Naive thymus-derived CD4-positive, alpha-beta T cell (primary cell): ENCODE measurements at regions of chr3 and their contacts with region 1.

Region 1: GRCh38 chr3:48609088-48610005 is at the start of gene UQCRC1:
- DNase-seq: peak; percentile 85 to 94 (median 93)
- ATAC-seq: peak; percentile 99
- H3K4me3 ChIP-seq: peak within 1 kb of the TSS; percentile 96
- H3K4me3 Mint-ChIP-seq: peak within 1 kb of the TSS; percentile 86 to 100 (median 98)
- H3K27ac ChIP-seq: peak within 1 kb of the TSS; percentile 84
- H3K27ac Mint-ChIP-seq: peak within 1 kb of the TSS; percentile 91 to 99 (median 97)
- H3K4me1 ChIP-seq: peaks cover 10 to 12% of the 10 kb centered on the region in 2 donors
- H3K4me1 Mint-ChIP-seq: peaks cover 12 to 31% (median 19%) of the 10 kb centered on the region in 7 donors
- H3K27me3 ChIP-seq: no peaks in the 10 kb centered on the region
- H3K27me3 Mint-ChIP-seq: no peaks in the 10 kb centered on the region
- total RNA-seq, gene UQCRC1: 77.3 to 156 (median 91.7) TPM

Region 2: DNA sequence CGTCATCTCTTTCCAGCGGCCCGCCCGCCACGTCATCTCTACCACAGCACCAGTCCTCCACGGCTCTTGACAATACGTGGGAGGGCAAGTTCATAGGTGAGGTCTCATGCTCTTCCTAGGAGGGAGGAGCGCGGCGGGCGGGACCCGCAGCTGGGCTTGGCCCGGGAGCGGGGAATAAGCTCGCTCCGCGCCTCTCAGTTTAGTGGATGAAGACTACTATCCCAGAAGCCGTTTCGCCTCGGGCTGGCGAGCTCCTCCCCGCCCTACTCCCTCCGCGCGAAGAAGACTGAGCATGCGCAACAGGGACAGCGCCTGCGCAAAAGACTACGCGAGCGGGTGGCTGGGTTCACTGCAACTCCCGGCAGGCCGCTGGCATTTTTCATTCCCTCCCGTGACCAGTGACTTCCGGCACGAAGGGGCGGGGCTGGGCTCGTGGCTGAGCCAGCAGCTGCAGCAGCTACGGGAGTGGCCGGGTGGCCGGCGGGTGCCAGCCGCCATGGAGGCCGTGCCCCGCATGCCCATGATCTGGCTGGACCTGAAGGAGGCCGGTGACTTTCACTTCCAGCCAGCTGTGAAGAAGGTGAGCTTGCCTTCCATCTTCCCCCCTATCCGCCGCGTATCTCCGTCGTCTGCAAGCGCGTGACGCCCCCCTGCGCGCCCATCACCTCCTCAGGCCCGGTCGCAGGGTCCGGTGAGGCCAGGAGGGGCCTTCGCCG is 1228.6 kb before region 1 on chr3 and contains the start of gene PTPN23:
- CTCF ChIA-PET with region 1: no interaction called
- POLR2A ChIA-PET with region 1: no interaction called
- intact Hi-C with region 1: loop called in 1 of 2 experiments (anchors 2 kb)
- DNase-seq: peak; percentile 96 to 99 (median 99)
- ATAC-seq: peak; percentile 82
- H3K4me3 ChIP-seq: peak within 1 kb of the TSS; percentile 86
- H3K4me3 Mint-ChIP-seq: peak within 1 kb of the TSS; percentile 90 to 100 (median 98)
- H3K27ac ChIP-seq: peak within 1 kb of the TSS; percentile 92
- H3K27ac Mint-ChIP-seq: peak within 1 kb of the TSS; percentile 92 to 100 (median 99)
- H3K4me1 ChIP-seq: peaks cover 23 to 26% of the 10 kb centered on the region in 2 donors
- H3K4me1 Mint-ChIP-seq: peaks cover 40 to 56% (median 48%) of the 10 kb centered on the region in 7 donors
- H3K27me3 ChIP-seq: no peaks in the 10 kb centered on the region
- H3K27me3 Mint-ChIP-seq: peaks cover 0 to 2% (median 0%) of the 10 kb centered on the region in 5 donors
- total RNA-seq, gene PTPN23: 35.8 to 51.2 (median 38.5) TPM

Region 3: GRCh38 chr3:48273594-48274211 is 335.6 kb before region 1 on chr3:
- CTCF ChIA-PET with region 1: no interaction called
- POLR2A ChIA-PET with region 1: no interaction called
- intact Hi-C with region 1: loop called in 1 of 2 experiments (anchors 1 kb)
- DNase-seq: peak in 8 of 9 donors; percentile 37 to 66 (median 55)
- ATAC-seq: peak; percentile 60
- H3K4me3 ChIP-seq: no peak overlapping the region
- H3K4me3 Mint-ChIP-seq: no peak overlapping the region
- H3K27ac ChIP-seq: no peak overlapping the region
- H3K27ac Mint-ChIP-seq: peak overlapping the region in 4 of 9 donors; percentile 8 to 74 (median 51)
- H3K4me1 ChIP-seq: peaks cover 4 to 14% of the 10 kb centered on the region in 2 donors
- H3K4me1 Mint-ChIP-seq: peaks cover 6 to 29% (median 21%) of the 10 kb centered on the region in 7 donors
- H3K27me3 ChIP-seq: no peaks in the 10 kb centered on the region
- H3K27me3 Mint-ChIP-seq: no peaks in the 10 kb centered on the region

Region 4: DNA sequence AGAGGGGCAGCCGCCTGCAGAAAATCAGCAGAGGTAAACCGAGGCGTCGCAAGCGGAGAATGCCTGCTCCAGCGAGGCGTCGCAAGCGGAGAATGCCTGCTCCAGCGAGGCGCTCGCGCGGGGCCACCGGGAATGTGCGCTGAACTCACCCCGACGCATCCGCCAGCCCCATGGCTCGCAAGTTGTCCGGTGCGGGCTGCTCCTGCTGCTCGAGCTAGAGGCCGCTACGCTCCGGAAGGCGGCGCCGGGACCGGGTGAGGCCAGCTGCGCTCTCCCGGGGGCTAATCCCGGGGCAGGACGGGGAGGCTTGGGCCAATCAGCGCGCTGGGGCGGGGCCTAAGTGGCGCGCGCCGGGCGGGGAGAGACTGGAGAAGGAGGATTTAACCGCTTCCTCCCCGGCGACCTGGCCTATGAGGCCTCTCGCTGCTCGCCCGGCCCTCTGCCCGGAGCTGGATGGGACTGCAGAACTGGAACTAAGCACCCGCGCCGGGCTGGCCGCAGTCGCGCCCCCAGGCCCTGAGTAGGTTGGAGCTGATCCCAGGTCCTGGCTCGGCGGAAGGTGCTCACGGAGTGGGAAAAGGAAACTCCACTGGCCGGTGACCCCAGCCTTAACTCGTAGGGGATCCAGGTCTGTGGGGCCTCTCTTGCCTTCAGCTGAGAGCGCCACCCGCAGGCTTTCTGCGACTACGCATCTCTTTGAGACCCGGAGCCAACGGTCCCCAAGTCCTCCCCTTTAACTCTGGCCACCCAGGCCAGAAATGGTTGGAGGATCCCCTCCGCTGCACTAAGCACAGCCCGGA is 26.1 kb after region 1 on chr3 and contains the start of gene SLC26A6:
- CTCF ChIA-PET with region 1: interaction called, 4 read pairs
- POLR2A ChIA-PET with region 1: interaction called, 8 read pairs
- intact Hi-C with region 1: loop called (anchors 1 kb)
- DNase-seq: peak; percentile 81 to 98 (median 86)
- ATAC-seq: peak; percentile 98
- H3K4me3 ChIP-seq: peak within 1 kb of the TSS; percentile 76
- H3K4me3 Mint-ChIP-seq: peak within 1 kb of the TSS; percentile 79 to 92 (median 88)
- H3K27ac ChIP-seq: peak within 1 kb of the TSS; percentile 70
- H3K27ac Mint-ChIP-seq: peak within 1 kb of the TSS in 7 of 9 donors; percentile 12 to 84 (median 68)
- H3K4me1 ChIP-seq: peaks cover 0 to 11% of the 10 kb centered on the region in 2 donors
- H3K4me1 Mint-ChIP-seq: peaks cover 4 to 31% (median 22%) of the 10 kb centered on the region in 7 donors
- H3K27me3 ChIP-seq: no peaks in the 10 kb centered on the region
- H3K27me3 Mint-ChIP-seq: no peaks in the 10 kb centered on the region
- total RNA-seq, gene SLC26A6: 15.1 to 37.6 (median 31.2) TPM

Region 5: DNA sequence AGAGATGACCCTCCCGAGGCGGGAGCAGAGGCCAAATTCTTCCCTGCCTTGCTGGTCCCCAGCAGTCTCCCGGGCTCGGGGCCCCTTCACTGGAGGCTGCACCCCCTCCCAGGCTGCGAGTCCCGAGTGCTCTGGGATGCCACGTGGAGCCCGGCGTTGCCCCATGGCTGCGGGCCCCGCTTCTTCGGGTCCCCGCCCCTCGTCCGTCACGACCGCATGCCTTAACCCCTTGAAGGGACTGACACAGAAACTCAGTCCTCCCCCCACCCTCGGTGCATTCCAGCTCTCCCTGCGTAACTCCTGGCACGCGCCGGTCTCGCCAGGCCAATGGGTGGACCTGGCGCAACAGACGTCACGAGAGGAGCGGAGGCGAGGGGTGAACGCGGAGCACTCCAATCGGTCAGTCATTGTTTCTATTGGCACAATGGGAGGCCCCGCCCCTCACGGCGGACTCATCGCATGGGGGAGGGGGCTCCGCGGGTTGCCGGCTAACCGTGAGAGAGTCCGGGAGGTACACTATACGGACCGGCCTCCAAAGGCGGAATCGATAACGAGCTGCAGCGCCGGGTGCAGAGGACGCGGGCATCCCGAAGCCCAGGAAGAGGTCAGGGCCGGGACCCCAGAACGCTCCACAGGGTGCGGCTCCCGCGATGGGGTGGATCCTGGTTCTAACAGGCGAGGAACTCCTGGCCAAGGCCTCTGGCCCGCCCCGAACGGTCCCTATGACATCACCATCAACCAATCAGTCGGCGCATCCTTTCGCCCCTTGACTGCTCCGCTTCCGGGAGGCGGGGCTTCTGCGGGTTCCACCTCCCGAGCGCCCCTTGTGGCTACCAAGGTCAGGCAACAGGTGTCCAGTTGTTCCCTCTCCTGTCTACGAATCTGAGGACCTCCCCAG is 54.3 kb after region 1 on chr3:
- CTCF ChIA-PET with region 1: interaction called, 3 read pairs
- POLR2A ChIA-PET with region 1: no interaction called
- intact Hi-C with region 1: loop called in 1 of 2 experiments (anchors 1 kb)
- DNase-seq: peak; percentile 50 to 94 (median 61)
- ATAC-seq: peak; percentile 88
- H3K4me3 ChIP-seq: peak overlapping the region; percentile 70
- H3K4me3 Mint-ChIP-seq: peak overlapping the region; percentile 34 to 89 (median 70)
- H3K27ac ChIP-seq: no peak overlapping the region
- H3K27ac Mint-ChIP-seq: peak overlapping the region in 1 of 9 donors; percentile 91
- H3K4me1 ChIP-seq: peaks cover 12 to 15% of the 10 kb centered on the region in 2 donors
- H3K4me1 Mint-ChIP-seq: peaks cover 0 to 29% (median 15%) of the 10 kb centered on the region in 7 donors
- H3K27me3 ChIP-seq: peaks cover 0 to 15% of the 10 kb centered on the region in 2 donors
- H3K27me3 Mint-ChIP-seq: peaks cover 4 to 20% (median 13%) of the 10 kb centered on the region in 5 donors

Region 6: DNA sequence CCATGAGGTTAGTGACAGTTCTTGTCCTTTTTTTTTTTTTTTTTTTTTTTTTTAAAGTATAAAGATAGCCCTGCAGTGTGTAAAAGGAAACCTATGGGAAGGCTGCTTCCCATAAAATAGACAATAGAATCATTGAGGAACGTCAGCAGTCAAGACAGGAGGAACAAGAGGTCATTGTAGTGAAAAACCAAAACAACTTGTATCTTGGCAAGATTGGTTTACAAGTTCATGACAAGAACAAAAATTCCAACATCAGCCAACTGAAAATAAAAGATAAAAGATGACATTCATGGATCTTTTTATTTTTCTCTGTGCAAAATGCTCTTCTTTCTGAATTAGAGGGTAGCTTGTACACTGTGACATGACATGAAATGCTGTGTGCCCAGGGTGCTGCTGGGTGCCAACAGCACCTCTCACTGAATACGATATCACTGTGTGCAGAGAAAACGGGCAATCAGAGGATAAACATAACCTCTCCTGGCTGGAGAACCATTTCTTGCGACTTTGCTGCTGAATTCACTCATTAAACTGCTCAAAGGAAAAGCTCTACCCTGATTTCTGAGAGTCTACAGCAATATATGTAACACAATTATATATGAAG is 137.8 kb after region 1 on chr3:
- CTCF ChIA-PET with region 1: no interaction called
- POLR2A ChIA-PET with region 1: no interaction called
- intact Hi-C with region 1: no loop called
- DNase-seq: no peak
- ATAC-seq: no peak
- H3K4me3 ChIP-seq: no peak overlapping the region
- H3K4me3 Mint-ChIP-seq: no peak overlapping the region
- H3K27ac ChIP-seq: no peak overlapping the region
- H3K27ac Mint-ChIP-seq: no peak overlapping the region
- H3K4me1 ChIP-seq: no peaks in the 10 kb centered on the region
- H3K4me1 Mint-ChIP-seq: no peaks in the 10 kb centered on the region
- H3K27me3 ChIP-seq: no peaks in the 10 kb centered on the region
- H3K27me3 Mint-ChIP-seq: no peaks in the 10 kb centered on the region